ENCODE measurements at regions of chr6 and their contacts with region 1.

Region 1: GRCh38 chr6:30725713-30726505 is 5.8 kb downstream of the TUBB start:
- DNase-seq: no peak
- H3K4me3 ChIP-seq: no peak overlapping the region
- H3K27ac ChIP-seq: peak overlapping the region in 3 of 5 donors; percentile 14 to 98 (median 49)
- H3K4me1 ChIP-seq: peaks cover 22 to 72% (median 47%) of the 10 kb centered on the region in 4 donors
- H3K27me3 ChIP-seq: no peaks in the 10 kb centered on the region
- CTCF ChIP-seq: no peak
- EP300 ChIP-seq: no peak
- POLR2A ChIP-seq: no peak

Region 2: GRCh38 chr6:29656157-29656556 is 1069.8 kb before region 1 on chr6:
- intact Hi-C with region 1: no loop called
- DNase-seq: no peak
- H3K4me3 ChIP-seq: no peak overlapping the region
- H3K27ac ChIP-seq: no peak overlapping the region
- H3K4me1 ChIP-seq: peaks cover 0 to 8% (median 0%) of the 10 kb centered on the region in 4 donors
- H3K27me3 ChIP-seq: peaks cover 0 to 32% (median 0%) of the 10 kb centered on the region in 3 donors
- CTCF ChIP-seq: no peak
- EP300 ChIP-seq: no peak
- POLR2A ChIP-seq: no peak

Region 3: DNA sequence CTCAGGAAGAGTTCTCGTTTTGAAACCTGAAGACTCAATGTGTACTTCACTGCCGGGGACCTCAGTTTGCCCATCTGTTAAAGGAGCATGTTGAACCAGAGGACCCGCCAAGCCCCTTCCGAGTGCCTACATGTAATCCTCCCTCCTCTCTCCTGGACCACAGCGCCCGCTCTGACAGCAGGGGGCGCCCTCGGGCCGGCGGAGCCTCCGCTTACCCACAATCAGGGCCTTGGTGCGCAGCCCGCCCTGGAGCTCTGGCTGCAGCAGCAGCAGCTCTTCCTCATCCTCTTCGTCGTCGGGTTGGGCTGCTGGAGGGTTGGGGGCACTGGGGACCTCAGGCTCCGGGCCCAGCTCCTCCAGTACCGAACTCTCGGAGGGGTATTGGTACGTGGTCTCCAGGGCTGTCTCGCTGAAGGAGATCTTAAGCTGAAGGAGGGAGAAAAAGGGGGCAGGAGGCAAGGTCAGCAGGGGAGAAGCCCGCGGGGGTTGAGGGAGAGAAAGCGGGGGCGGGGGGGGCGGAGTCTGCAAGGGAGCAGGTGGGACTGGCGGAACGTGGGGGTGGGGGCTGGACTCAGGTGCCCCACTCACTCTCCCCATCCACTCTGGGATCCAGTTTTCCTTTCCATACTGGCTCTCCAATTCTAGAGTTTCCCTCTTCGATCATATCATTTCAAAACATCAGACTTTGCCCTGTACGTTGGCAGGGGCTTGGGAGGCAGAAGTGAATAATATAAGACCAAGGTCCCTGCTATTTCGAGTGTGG is 46.8 kb before region 1 on chr6:
- intact Hi-C with region 1: loop called (anchors 5 kb)
- DNase-seq: peak; percentile 90 to 95
- H3K4me3 ChIP-seq: peak overlapping the region; percentile 9 to 85 (median 44)
- H3K27ac ChIP-seq: peak overlapping the region in 4 of 5 donors; percentile 94 to 99 (median 98)
- H3K4me1 ChIP-seq: peaks cover 19 to 58% (median 40%) of the 10 kb centered on the region in 4 donors
- H3K27me3 ChIP-seq: no peaks in the 10 kb centered on the region
- CTCF ChIP-seq: peak in 5 of 7 experiments; percentile 88 to 97 (median 95)
- EP300 ChIP-seq: no peak
- POLR2A ChIP-seq: no peak

Region 4: DNA sequence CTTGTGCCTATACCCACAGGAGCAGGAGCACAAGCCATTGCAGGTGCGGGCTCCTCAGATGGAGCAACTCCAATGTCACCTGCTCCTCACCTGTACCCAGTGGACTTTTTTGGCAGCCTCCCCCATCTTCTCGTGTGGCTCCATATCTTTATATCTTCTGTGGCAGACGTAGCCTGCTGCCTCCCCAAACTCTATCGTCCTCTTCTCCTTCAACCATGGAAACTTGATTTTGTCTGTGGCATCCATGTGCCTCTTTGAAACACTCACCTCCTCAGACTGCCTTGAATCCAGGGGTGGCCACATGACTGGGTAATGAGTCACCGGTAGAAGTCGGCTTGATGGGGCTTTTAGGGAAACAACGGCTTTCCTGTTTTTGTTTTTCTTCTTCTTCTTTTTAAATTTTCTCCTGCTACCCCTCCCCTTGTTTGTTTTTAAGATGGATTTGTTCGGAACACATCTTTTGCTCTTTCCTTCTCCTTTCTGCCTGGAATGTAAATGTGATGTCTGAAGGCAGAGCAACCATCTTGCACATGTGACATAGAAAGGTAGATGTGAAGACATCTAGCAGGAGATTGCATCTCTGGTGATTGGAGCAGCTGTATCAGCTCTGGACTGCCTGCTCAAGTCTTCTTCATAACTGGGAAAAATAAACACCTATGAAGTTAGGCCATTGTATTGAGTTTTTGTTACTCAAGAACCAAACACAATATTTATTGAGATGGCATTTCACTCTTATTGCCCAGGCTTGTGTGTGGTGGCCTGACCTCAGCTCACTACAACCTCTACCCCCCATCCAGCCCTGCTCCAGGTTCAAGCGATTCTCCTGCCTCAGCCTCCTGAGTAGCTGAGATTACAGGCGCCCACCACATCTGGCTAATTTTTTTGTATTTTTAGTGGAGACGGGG is 88.5 kb after region 1 on chr6:
- intact Hi-C with region 1: no loop called
- DNase-seq: peak; percentile 35 to 44
- H3K4me3 ChIP-seq: no peak overlapping the region
- H3K27ac ChIP-seq: peak overlapping the region in 4 of 5 donors; percentile 67 to 75 (median 70)
- H3K4me1 ChIP-seq: peaks cover 15 to 45% (median 25%) of the 10 kb centered on the region in 4 donors
- H3K27me3 ChIP-seq: no peaks in the 10 kb centered on the region
- CTCF ChIP-seq: no peak
- EP300 ChIP-seq: no peak
- POLR2A ChIP-seq: no peak

Measured in stomach (tissue), 19 donors.